ENCODE measurements at regions of chr17 and their contacts with region 1.

Region 1: GRCh38 chr17:47649153-47649971 is at the start of gene KPNB1:
- DNase-seq: peak; percentile 100
- H3K4me3 ChIP-seq: peak within 1 kb of the TSS; percentile 90 to 97 (median 93)
- H3K27ac ChIP-seq: peak within 1 kb of the TSS; percentile 44
- H3K4me1 ChIP-seq: peaks cover 37% of the 10 kb centered on the region
- H3K27me3 ChIP-seq: no peaks in the 10 kb centered on the region
- CTCF ChIP-seq: no peak
- POLR2A ChIP-seq: peak; percentile 82
- total RNA-seq, gene KPNB1: 495 and 508 TPM in 2 replicates

Region 2: GRCh38 chr17:47621293-47622178 is 27.8 kb before region 1 on chr17:
- CTCF ChIA-PET with region 1: interaction called, 6 read pairs
- POLR2A ChIA-PET with region 1: interaction called, 4 read pairs
- dilution Hi-C with region 1: no loop called
- intact Hi-C with region 1: loop called (anchors 1 kb)
- DNase-seq: peak; percentile 80
- H3K4me3 ChIP-seq: peak overlapping the region in 1 of 3 experiments; percentile 23
- H3K27ac ChIP-seq: peak overlapping the region; percentile 61
- H3K4me1 ChIP-seq: peaks cover 23% of the 10 kb centered on the region
- H3K27me3 ChIP-seq: no peaks in the 10 kb centered on the region
- CTCF ChIP-seq: no peak
- POLR2A ChIP-seq: no peak

Region 3: DNA sequence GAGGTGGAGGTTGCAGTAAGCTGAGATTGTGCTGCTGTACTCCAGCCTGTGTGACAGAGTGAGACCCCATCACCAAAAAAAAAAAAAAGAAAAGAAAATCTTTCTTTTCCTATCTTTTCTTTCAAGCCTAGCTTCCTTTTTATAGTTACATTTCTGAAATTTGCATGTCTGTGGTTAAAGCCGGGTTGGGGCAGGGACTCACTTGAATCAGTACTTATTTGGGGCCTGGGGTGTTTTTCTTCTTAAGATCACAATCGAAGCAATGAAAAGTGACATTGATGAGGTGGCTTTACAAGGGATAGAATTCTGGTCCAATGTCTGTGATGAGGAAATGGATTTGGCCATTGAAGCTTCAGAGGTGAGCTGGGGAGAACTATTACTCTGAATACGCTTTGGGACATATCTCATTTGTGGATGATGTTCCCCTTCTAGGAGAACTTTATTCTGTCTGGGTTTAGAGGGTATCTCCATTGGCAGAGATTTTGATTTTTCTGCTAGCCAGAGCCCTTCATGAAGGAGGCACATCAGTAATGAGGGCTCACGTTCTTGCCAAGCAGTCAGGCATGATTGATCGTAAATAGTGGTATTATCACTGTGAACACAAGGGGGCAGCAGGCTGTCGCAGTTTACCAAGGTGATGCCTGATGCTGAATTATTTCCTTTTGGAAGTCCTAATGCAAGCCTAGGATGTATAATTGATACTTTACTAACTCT is 14.7 kb after region 1 on chr17:
- CTCF ChIA-PET with region 1: interaction called, 23 read pairs
- POLR2A ChIA-PET with region 1: interaction called, 9 read pairs
- dilution Hi-C with region 1: no loop called
- intact Hi-C with region 1: no loop called
- DNase-seq: peak; percentile 80
- H3K4me3 ChIP-seq: no peak overlapping the region
- H3K27ac ChIP-seq: no peak overlapping the region
- H3K4me1 ChIP-seq: no peaks in the 10 kb centered on the region
- H3K27me3 ChIP-seq: no peaks in the 10 kb centered on the region
- CTCF ChIP-seq: peak; percentile 69 to 78
- POLR2A ChIP-seq: no peak

Region 4: DNA sequence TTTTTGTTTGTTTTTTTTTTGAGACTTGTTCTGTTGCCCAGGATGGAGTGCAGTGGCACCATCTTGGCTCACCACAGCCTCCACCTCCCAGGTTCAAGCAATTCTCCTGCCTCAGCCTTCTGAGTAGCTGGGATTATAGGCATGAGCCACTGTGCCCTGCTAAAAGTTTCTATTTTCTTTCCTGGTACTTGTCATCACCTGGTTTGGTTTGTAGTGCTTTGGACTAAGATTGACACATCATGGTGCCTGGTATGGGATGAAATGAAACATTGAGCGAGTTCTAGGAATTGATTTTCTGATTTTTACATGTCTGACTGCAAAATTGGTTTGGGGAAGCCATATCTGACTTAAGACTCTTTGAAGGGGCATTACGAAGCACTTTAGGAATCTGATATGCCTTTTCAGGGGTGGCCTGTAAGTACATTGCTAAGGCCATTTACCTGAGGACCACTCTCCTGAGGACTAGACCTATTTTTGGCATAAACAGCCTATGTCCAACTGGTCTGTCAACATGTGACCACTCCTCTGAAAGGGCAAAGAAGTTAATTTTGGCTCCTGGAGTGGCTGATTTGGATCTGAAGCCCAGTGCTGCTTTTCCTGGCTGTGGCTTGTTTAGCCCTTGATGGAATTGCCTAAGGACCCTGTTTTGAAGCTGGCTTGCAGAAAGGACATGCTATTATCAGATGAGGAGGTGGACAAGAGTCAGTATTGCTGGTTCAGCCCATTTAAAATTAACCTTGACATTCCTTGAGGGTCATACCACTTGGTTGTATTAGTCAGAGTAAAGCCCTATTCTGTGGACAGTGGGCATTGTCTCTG is 26.2 kb after region 1 on chr17:
- CTCF ChIA-PET with region 1: interaction called, 3 read pairs
- POLR2A ChIA-PET with region 1: interaction called, 11 read pairs
- dilution Hi-C with region 1: no loop called
- intact Hi-C with region 1: no loop called
- DNase-seq: no peak
- H3K4me3 ChIP-seq: no peak overlapping the region
- H3K27ac ChIP-seq: no peak overlapping the region
- H3K4me1 ChIP-seq: no peaks in the 10 kb centered on the region
- H3K27me3 ChIP-seq: no peaks in the 10 kb centered on the region
- CTCF ChIP-seq: no peak
- POLR2A ChIP-seq: peak; percentile 49

Region 5: GRCh38 chr17:47687748-47688147 is 38.4 kb after region 1 on chr17:
- CTCF ChIA-PET with region 1: no interaction called
- POLR2A ChIA-PET with region 1: no interaction called
- dilution Hi-C with region 1: no loop called
- intact Hi-C with region 1: loop called (anchors 5 kb)
- DNase-seq: no peak
- H3K4me3 ChIP-seq: no peak overlapping the region
- H3K27ac ChIP-seq: no peak overlapping the region
- H3K4me1 ChIP-seq: peaks cover 35% of the 10 kb centered on the region
- H3K27me3 ChIP-seq: no peaks in the 10 kb centered on the region
- CTCF ChIP-seq: no peak
- POLR2A ChIP-seq: no peak

Region 6: DNA sequence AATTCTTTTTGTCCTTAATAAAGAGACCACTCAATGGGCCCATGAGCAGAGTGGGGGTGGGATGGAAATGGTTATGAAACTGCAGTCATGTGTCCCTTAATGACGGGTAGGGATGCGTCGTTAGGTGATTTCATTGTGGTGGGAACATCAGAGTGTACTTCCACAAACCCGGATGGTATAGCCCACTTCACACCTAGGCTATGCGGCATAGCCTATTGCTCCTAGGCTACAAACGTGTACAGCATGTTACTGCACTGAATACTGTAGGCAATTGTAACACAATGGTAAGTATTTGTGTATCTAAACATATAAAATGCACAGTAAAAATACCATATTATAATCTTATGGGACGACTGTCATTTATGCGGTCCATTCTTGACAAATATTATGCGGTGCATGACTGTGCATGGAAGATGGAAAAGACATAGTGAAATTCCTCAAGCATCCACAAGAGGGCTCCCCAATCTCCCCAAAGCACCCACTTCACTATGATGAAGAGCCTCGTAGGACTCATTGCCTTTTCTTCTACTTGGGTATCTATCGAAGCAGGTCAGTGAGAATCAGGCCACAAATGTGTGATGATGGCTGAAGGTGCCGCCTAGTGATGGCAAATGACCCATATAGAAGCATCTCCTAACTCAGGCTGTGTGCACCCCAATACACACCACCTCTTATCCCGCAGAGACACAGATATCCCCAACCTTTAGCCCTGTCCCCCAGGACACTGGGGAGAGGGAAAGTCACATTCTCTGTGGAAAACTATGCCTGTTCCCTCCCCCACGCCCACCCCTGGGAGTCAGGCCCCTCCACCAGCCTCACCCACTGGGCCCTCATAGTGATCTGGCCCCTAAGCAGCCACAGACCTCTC is 127.2 kb after region 1 on chr17:
- CTCF ChIA-PET with region 1: no interaction called
- POLR2A ChIA-PET with region 1: no interaction called
- dilution Hi-C with region 1: no loop called
- intact Hi-C with region 1: no loop called
- DNase-seq: peak; percentile 40
- H3K4me3 ChIP-seq: no peak overlapping the region
- H3K27ac ChIP-seq: no peak overlapping the region
- H3K4me1 ChIP-seq: no peaks in the 10 kb centered on the region
- H3K27me3 ChIP-seq: peaks cover 13 to 22% of the 10 kb centered on the region in 2 experiments
- CTCF ChIP-seq: peak; percentile 57 to 72
- POLR2A ChIP-seq: no peak

Measured in endothelial cell of umbilical vein (primary cell).